SK-N-SH (cell line): ENCODE measurements at regions of chr6 and their contacts with region 1.

Region 1: DNA sequence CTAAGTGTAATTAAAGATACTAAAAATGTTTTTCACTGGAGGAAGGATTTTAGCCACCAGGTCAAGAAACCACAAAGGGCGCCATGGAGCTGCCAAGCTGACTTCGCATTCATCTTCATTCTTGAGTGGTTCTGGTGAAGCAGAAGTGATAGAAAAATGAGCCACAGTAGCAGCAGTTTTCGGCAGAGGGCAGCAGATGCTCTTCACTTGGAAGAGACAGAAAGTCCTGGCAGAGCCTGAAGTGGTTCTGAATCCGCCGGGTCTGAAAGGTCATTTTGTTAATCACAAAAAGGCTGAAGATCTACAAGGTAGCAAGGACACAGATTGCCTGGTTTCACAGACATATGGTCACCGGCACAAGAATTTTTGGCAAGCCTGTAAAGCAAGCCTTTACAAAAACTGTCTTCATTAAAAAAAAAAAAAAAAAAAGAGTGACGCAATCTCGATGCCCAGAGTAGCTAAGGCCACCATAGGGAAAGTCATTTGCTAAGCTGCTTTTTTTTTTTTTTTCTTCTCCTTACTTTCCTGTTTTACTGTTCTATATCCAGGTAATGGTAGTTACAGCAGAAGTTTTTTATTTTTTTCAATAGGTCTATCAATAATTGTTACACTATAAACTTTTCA is 345.1 kb upstream of the AGPAT4 start:
- DNase-seq: peak; percentile 64
- H3K4me3 ChIP-seq: no peak overlapping the region
- H3K27ac ChIP-seq: no peak overlapping the region
- H3K4me1 ChIP-seq: peaks cover 0 to 10% of the 10 kb centered on the region in 2 experiments; a peak in 2 of 4 replicates
- H3K27me3 ChIP-seq: no peaks in the 10 kb centered on the region
- CTCF ChIP-seq: peak; percentile 63
- EP300 ChIP-seq: no peak
- RAD21 ChIP-seq: peak; percentile 87

Region 2: GRCh38 chr6:161598896-161599295 is 20.0 kb before region 1 on chr6:
- CTCF ChIA-PET with region 1: interaction called, 12 read pairs
- POLR2A ChIA-PET with region 1: no interaction called
- DNase-seq: no peak
- H3K4me3 ChIP-seq: no peak overlapping the region
- H3K27ac ChIP-seq: no peak overlapping the region
- H3K4me1 ChIP-seq: no peaks in the 10 kb centered on the region
- H3K27me3 ChIP-seq: no peaks in the 10 kb centered on the region
- CTCF ChIP-seq: no peak
- EP300 ChIP-seq: no peak
- RAD21 ChIP-seq: no peak